ENCODE measurements at regions of chr2 and their contacts with region 1.

Region 1: DNA sequence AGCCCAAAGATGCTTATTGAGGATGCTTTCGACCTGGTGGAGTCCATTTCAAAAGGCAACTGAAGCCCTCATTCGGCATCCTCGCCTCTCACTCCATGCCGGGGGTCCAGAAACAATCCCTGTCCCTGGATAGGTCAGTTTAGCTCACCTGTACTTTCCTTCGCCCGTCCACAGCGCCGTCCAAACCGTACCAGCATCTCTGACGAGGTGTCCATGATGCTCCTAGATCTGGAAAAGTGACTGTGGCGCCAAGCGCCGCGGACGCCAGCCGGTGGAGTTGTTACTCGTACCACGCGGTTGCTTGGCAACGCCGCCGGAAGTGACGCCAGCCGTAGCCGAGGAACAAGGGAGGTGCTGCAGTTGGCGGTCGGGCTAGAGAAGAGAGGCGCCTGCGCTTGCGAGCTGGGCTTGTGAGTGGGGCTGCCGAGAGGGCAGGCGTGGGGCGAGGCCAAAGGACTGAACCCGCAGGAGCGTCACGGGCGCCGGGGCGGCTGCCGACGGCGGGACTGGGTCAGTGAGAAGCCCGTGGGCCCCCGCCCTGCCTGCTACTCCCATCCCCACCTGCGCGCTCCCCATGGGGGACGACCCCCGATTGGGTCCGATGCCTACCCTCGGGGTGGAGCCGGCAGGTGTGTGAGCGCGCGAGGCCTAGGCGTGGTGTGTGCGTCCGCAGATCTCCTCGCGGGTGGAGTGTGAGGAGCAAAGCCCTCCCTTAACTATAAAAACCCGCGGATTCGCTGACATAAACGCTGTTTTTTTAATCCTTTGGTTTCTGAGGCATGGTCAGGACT is at the starts of genes CFAP210 and PHOSPHO2:
- DNase-seq: peak; percentile 98 to 100 (median 99)

Region 2: GRCh38 chr2:169743549-169743948 is 49.2 kb after region 1 on chr2:
- intact Hi-C with region 1: loop called (anchors 10 kb)
- DNase-seq: peak in 26 of 42 donors; percentile 14 to 66 (median 37)